ENCODE measurements at regions of chr15 and their contacts with region 1.

Region 1: DNA sequence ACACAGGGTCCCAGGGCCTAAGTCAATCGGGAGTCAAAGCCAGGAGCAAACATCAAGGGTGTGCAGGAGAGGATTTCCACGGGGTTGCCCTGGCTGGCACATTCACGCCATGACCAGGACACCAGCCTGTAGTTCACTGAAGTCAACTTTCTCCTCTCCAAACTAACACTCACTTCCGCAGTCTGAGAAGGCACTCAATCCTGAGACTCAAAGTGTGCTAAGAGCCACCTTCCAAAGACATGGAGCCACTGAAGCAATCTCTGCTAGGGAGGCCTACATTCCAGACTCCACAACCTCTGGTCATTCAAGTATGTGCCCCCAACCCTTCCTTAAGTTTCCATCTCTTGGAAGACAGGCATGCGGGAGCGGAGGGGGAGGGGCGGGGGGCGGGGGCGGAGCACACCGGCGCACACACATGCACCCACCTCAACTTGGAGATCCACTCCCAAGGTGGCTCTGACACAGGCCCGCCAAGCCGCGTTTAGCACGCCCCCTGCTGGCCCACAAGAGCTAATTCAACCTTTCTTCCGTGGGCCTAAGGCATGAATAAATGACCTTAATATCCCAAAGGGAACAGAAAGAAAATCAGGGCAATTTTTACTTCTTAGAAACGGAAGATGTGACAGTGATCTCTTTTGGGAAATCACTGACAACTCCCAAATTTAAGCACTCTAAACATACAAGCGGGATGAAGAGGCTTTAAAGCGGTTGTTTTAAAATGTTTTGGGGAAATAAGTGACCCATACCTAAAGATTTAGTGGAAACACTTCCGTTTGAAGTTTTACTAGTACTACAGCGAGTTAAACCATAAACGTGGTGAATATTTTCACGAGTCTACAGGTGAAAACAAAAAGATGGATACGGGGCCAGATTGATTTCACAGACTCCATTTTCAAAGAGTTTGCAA is 162.5 kb upstream of the CHRNA7 start:
- DNase-seq: peak; percentile 69
- H3K4me3 ChIP-seq: no peak overlapping the region
- H3K27ac ChIP-seq: no peak overlapping the region
- H3K4me1 ChIP-seq: peaks cover 15% of the 10 kb centered on the region
- H3K27me3 ChIP-seq: no peaks in the 10 kb centered on the region
- CTCF ChIP-seq: peak; percentile 89

Region 2: GRCh38 chr15:31799715-31800321 is 68.0 kb before region 1 on chr15:
- intact Hi-C with region 1: loop called (anchors 10 kb)
- DNase-seq: peak; percentile 36
- H3K4me3 ChIP-seq: no peak overlapping the region
- H3K27ac ChIP-seq: peak overlapping the region; percentile 77
- H3K4me1 ChIP-seq: peaks cover 28% of the 10 kb centered on the region
- H3K27me3 ChIP-seq: no peaks in the 10 kb centered on the region
- CTCF ChIP-seq: no peak

Measured in left ventricle myocardium inferior (tissue), 1 donor.